ENCODE measurements at regions of chr14 and their contacts with region 1.

Region 1: GRCh38 chr14:102917469-102918211 is 4.8 kb upstream of the AMN start:
- DNase-seq: peak; percentile 78
- H3K4me3 ChIP-seq: no peak overlapping the region
- H3K27ac ChIP-seq: no peak overlapping the region
- H3K4me1 ChIP-seq: peaks cover 28% of the 10 kb centered on the region
- CTCF ChIP-seq: peak; percentile 88

Region 2: DNA sequence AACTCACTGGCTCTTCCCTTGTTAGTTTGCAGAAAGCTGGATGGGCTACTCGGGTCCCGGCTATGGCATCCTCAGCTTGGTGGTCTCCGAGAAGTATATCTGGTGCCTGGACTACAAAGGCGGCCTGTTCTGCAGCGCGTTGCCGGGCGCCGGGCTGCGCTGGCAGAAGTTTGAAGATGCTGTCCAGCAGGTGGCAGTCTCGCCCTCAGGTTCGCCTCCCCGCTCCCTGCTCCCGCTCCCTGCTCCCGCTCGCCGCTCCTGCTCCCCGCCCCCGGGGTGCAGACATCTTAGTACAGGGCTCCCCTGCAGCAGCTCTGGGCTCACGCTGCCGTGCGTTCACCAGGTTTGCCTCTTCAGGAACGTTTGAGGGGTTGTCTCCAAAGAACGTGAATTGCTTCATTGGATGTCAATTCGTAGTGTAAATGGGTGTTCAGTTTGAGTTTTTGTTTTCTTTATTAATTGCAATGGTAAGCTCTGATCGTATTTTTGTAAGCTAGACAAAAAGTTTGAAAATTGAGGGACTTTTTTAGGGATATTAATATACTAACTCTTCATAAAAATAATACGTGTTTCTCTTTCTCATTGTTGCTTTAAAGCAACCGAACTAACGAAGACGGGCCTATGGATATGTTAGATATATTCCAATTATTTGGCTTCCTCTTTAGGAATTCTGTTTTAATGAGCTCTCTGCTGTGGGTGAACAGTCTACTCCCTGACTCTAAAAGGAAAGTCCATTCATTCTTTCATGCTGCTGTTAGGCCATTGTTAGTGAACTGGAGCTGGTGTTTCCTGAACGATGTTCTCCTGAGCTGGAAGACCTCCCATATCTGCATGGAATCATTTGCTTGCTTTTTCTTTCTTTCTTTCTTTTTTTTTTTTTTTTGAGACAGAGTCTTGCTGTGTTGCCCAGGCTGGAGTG is 479.4 kb before region 1 on chr14:
- CTCF ChIA-PET with region 1: no interaction called
- POLR2A ChIA-PET with region 1: no interaction called
- intact Hi-C with region 1: loop called (anchors 5 kb)
- DNase-seq: peak; percentile 80
- H3K4me3 ChIP-seq: peak overlapping the region; percentile 11
- H3K27ac ChIP-seq: no peak overlapping the region
- H3K4me1 ChIP-seq: no peaks in the 10 kb centered on the region
- CTCF ChIP-seq: peak; percentile 83

Region 3: DNA sequence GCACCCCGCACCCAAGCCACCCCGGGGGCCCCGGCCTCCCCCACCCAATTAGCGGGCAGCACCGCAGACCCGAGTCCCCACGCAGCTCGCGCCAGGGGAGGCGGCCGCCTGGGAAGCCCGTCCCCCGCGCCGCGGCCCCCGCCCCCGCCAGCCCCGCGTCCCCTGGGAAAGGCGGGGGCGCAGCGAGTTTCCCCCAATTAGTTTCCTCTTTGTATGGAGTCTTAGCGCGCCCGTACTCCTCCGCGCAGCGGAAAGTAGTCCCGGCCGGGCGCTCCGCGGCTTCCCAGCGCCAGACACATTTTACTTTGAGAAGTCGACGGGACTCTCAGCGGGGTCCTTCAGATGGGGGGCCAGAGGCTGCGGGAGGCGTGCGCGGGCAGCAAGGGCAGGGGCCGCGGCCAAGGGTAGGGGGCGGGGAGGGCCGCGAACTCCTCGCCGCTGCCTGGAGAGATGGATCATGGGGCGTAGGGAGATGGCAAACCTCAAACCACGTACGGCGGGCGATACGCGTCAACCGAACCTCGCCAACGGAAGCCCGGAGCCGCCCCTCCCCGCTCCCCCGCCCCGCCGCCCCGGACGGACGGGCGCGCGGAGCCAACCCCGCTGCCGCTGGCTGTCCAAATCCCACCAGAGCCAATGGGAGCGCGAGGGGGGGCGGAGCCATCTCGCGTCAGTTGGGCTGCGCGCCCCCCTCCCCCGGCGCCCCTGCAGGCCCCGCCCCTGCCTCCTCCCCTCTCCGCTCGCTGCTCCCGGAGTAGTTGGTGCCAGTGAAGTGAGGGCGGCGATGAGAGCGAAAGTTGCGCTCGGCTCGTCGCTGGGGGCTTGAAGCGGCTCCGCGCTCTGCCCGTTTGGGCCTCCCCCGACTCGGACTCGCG is 325.5 kb before region 1 on chr14 and contains the start of gene RCOR1:
- CTCF ChIA-PET with region 1: no interaction called
- POLR2A ChIA-PET with region 1: no interaction called
- intact Hi-C with region 1: loop called (anchors 5 kb)
- DNase-seq: peak; percentile 98
- H3K4me3 ChIP-seq: peak within 1 kb of the TSS; percentile 83
- H3K27ac ChIP-seq: peak within 1 kb of the TSS; percentile 92
- H3K4me1 ChIP-seq: peaks cover 21% of the 10 kb centered on the region
- CTCF ChIP-seq: no peak
- total RNA-seq, gene RCOR1: 12.1 and 22.0 TPM in 2 replicates

Region 4: GRCh38 chr14:102774391-102775153 is 143.1 kb before region 1 on chr14:
- CTCF ChIA-PET with region 1: no interaction called
- POLR2A ChIA-PET with region 1: no interaction called
- intact Hi-C with region 1: loop called (anchors 1 kb)
- DNase-seq: peak; percentile 67
- H3K4me3 ChIP-seq: no peak overlapping the region
- H3K27ac ChIP-seq: no peak overlapping the region
- H3K4me1 ChIP-seq: peaks cover 12% of the 10 kb centered on the region
- CTCF ChIP-seq: peak; percentile 84

Region 5: DNA sequence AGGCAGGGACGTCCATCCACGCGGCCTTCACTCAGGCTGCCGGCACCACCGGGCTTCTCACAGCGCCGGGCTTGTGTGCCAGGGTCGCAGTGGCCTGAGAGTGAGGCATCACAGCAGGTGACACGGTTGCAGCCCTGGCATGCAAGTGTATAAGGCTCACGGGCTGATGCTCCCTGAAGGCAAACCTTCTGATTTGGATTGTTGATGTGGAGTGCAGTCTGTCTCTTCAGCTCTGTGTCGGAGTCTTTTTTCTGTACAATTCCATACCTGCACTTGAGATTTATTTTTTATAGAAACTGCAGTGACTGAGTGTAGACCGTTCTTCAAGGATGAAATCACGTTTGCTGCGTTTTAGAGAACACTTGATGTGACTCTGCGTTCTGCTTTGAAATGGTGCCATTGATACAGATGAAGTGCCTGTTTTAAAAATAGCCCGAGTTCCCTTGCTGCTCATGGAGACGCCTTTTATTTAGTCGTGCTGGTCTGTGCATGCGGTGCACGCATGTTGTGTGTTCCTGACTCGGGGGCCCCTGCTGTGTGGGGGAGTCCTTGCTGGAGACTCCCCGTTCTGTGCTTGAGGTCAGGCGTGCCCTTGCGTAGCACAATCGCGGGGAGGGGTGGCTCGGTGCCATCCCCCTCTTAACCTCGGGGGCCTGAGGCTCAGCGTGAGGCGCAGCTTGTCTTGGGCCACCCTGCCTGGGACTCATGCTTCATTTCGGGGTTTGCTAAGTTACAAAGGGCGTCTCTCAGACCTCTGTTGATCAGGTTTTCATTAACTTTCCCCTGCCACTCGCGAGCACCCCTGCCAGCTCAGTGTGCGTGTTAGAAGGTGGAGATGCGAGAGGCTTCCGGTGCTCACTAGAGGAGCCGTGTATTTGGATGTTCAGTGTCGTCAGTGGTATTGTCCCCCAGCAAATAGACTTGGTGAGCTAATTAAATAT is 16.7 kb before region 1 on chr14:
- CTCF ChIA-PET with region 1: no interaction called
- POLR2A ChIA-PET with region 1: interaction called, 3 read pairs
- intact Hi-C with region 1: loop called (anchors 1 kb)
- DNase-seq: peak; percentile 42
- H3K4me3 ChIP-seq: peak overlapping the region; percentile 36
- H3K27ac ChIP-seq: peak overlapping the region; percentile 59
- H3K4me1 ChIP-seq: peaks cover 28% of the 10 kb centered on the region
- CTCF ChIP-seq: no peak

Region 6: GRCh38 chr14:103391048-103391447 is 473.4 kb after region 1 on chr14:
- CTCF ChIA-PET with region 1: no interaction called
- POLR2A ChIA-PET with region 1: no interaction called
- intact Hi-C with region 1: no loop called
- DNase-seq: peak; percentile 68
- H3K4me3 ChIP-seq: no peak overlapping the region
- H3K27ac ChIP-seq: peak overlapping the region; percentile 17
- H3K4me1 ChIP-seq: peaks cover 46% of the 10 kb centered on the region
- CTCF ChIP-seq: peak; percentile 98

Measured in OCI-LY7 (cell line).